ENCODE measurements at regions of chr1 and their contacts with region 1.

Region 1: GRCh38 chr1:211578640-211579433 is at the start of gene SLC30A1:
- DNase-seq: peak; percentile 100
- ATAC-seq: peak; percentile 94
- H3K4me3 Mint-ChIP-seq: peak within 1 kb of the TSS; percentile 89
- H3K27ac Mint-ChIP-seq: peak within 1 kb of the TSS; percentile 85
- H3K4me1 Mint-ChIP-seq: peaks cover 31% of the 10 kb centered on the region
- H3K27me3 Mint-ChIP-seq: no peaks in the 10 kb centered on the region
- total RNA-seq, gene SLC30A1: 2.9 to 4.5 TPM

Region 2: GRCh38 chr1:211229365-211229759 is 349.5 kb before region 1 on chr1:
- CTCF ChIA-PET with region 1: no interaction called
- POLR2A ChIA-PET with region 1: no interaction called
- intact Hi-C with region 1: no loop called
- DNase-seq: no peak
- ATAC-seq: peak; percentile 65
- H3K4me3 Mint-ChIP-seq: peak overlapping the region; percentile 25
- H3K27ac Mint-ChIP-seq: peak overlapping the region; percentile 61
- H3K4me1 Mint-ChIP-seq: peaks cover 25% of the 10 kb centered on the region
- H3K27me3 Mint-ChIP-seq: no peaks in the 10 kb centered on the region

Region 3: GRCh38 chr1:211258756-211259637 is 319.8 kb before region 1 on chr1 and contains the start of gene RCOR3:
- CTCF ChIA-PET with region 1: no interaction called
- POLR2A ChIA-PET with region 1: no interaction called
- intact Hi-C with region 1: loop called in 1 of 2 experiments (anchors 1 kb)
- DNase-seq: peak; percentile 97
- ATAC-seq: peak; percentile 83
- H3K4me3 Mint-ChIP-seq: peak within 1 kb of the TSS; percentile 90
- H3K27ac Mint-ChIP-seq: peak within 1 kb of the TSS; percentile 96
- H3K4me1 Mint-ChIP-seq: peaks cover 13% of the 10 kb centered on the region
- H3K27me3 Mint-ChIP-seq: no peaks in the 10 kb centered on the region
- total RNA-seq, gene RCOR3: 31.0 to 33.4 TPM

Region 4: GRCh38 chr1:211625040-211625439 is 46.2 kb after region 1 on chr1:
- CTCF ChIA-PET with region 1: no interaction called
- POLR2A ChIA-PET with region 1: no interaction called
- intact Hi-C with region 1: loop called in 1 of 2 experiments (anchors 2 kb)
- DNase-seq: peak; percentile 40
- ATAC-seq: peak; percentile 53
- H3K4me3 Mint-ChIP-seq: no peak overlapping the region
- H3K27ac Mint-ChIP-seq: no peak overlapping the region
- H3K4me1 Mint-ChIP-seq: peaks cover 3% of the 10 kb centered on the region
- H3K27me3 Mint-ChIP-seq: no peaks in the 10 kb centered on the region

Region 5: DNA sequence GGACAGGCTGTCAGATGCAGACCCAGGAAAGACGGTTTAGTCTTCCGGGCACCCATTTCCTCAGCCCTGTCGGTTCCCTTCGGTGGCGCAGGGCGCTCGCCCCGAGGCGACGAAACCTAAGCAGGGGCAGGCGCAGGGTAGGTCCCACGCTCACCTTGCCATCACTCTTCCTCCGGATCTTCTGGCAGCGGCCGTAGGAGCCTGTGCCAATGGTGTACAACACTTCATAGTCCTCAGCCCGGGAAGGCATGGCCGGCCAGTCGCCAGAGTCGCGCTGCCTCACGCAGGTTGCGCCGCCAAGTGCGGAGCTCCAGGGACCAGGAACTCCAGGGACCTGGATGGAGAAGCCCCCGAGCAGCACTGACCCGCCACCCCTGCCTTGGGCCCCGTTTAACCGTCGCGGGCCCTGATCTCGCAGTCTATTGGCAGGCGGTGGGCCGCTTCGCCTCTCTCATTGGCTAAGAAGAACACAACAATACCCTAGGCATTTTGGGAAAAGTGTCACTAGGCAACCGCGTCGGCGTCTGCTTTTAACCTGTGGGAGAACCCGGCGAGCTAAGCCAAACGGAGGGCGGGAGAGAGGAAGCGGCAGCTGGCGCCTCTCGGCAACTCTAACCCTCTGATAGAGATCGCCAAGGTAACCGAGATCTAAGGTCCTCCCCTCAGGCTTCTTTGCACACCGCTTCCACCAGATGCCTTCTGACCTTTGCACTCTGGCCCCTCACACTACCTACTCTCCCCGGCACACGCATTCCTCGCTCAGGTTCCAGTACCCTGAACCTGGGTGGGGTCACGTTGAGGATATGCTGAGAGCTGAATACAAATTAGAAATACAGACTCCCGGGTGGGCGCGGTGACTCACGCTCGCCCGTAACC is 96.6 kb after region 1 on chr1 and contains the start of gene NEK2:
- CTCF ChIA-PET with region 1: interaction called, 3 read pairs
- POLR2A ChIA-PET with region 1: no interaction called
- intact Hi-C with region 1: loop called (anchors 1 kb)
- DNase-seq: peak; percentile 94
- ATAC-seq: peak; percentile 98
- H3K4me3 Mint-ChIP-seq: peak within 1 kb of the TSS; percentile 94
- H3K27ac Mint-ChIP-seq: peak within 1 kb of the TSS; percentile 84
- H3K4me1 Mint-ChIP-seq: peaks cover 6% of the 10 kb centered on the region
- H3K27me3 Mint-ChIP-seq: no peaks in the 10 kb centered on the region
- total RNA-seq, gene NEK2: 32.3 to 38.8 TPM

Region 6: DNA sequence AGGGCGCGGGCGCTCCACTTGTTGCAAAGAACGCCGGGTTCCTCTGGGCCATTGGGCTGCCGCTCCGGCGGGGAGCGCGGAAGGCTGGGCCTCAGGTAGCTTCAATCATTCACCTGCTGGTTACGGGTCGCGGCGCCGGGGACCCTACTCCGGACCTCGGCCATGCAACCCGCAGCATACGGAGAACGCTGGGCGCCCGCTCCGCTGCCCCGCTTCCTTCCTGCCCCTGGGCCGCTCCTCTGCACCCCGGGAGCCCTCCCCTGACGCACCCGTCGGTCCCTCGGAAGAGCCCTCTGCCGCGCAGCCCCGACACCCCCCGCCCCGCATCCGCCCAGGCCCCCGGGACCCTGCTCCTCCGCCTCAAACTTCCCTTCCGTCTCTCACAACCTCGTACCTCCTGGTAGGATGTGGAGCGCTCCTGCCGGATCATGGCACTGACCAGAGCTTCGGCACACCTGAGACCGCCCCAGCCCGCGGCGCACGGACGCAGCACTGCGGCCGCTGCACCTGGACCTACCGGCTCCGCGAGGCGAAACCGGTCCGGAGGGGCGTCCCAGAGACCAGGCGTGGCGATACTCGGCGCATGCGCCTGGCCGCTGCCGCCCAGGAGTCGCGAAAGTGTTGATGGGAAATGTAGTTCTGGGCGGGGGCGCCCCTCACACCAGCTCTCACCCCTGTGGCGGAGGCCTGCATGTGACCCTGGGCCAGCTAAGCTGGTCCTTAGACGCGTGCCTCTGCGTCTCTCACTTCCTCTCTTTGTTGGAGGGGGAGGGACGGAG is 835.7 kb after region 1 on chr1 and contains the start of gene PACC1:
- CTCF ChIA-PET with region 1: no interaction called
- POLR2A ChIA-PET with region 1: no interaction called
- intact Hi-C with region 1: loop called in 1 of 2 experiments (anchors 10 kb)
- DNase-seq: peak; percentile 93
- ATAC-seq: peak; percentile 98
- H3K4me3 Mint-ChIP-seq: peak within 1 kb of the TSS; percentile 93
- H3K27ac Mint-ChIP-seq: peak within 1 kb of the TSS; percentile 92
- H3K4me1 Mint-ChIP-seq: peaks cover 22% of the 10 kb centered on the region
- H3K27me3 Mint-ChIP-seq: no peaks in the 10 kb centered on the region
- total RNA-seq, gene PACC1: 9.2 to 13.8 TPM

Measured in activated CD4-positive, alpha-beta T cell treated with anti-CD3 and anti-CD28 coated beads for 36 hours (primary cell).